Heart right ventricle (tissue), 16 donors: ENCODE measurements at regions of chr19 and their contacts with region 1.

Region 1: DNA sequence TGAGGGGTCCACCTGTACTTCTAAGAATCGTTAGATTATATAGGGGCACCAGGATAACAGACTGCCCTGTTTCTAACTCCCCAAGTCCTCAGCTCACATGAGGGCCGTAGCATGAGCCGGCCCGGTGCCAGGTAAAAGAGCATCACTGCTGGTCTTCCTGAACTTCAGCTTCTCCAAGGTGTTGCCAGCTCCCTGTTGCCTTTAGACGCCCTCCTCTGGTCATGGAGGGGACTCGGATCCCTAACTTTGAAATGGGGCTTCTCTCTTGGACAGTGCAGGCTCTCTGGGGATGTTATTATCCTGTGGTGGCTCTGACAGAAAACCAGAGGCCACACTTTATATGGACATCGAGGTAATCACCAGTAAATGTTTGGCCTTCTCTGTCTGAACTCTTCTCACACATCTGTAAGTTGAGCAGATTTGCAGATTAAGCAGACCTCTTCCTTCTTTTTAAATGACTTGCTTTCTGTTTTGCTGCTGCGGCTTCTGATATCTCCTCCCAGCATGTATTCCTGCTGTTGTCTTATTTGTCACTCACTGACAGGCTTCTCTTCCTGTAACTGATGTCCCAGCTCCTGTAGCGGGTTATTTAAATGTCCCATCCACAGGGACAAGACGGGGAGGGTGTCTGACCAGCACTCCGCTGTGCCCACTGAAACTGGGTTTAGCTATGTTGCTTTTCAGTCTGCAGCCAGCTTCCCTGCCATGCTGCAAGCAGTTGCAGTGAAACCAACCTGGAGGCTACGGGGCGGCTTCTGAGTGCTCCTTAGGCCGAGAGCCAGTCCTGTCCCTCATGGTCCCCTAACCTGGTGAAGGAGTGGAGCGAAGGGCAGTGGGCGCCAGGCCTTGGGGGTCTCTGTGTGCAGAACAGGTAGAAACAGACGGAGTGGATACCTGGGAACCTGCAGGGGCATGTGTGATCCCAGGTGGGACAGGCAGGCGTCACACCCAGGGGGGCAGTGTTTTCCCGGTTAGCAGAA is 39.2 kb downstream of the TSSK6 start:
- DNase-seq: no peak
- ATAC-seq: peak in 5 of 8 donors; percentile 30 to 53 (median 44)
- H3K4me3 ChIP-seq: no peak overlapping the region
- H3K27ac ChIP-seq: peak overlapping the region in 1 of 10 donors; percentile 38
- H3K4me1 ChIP-seq: peaks cover 0 to 44% (median 25%) of the 10 kb centered on the region in 9 donors
- H3K27me3 ChIP-seq: no peaks in the 10 kb centered on the region
- CTCF ChIP-seq: peak in 7 of 9 donors; percentile 20 to 54 (median 44)

Region 2: GRCh38 chr19:19410275-19411192 is 65.6 kb before region 1 on chr19:
- intact Hi-C with region 1: loop called in 2 of 10 experiments (anchors 10 kb)
- DNase-seq: no peak
- ATAC-seq: peak in 1 of 8 donors; percentile 24
- H3K4me3 ChIP-seq: no peak overlapping the region
- H3K27ac ChIP-seq: no peak overlapping the region
- H3K4me1 ChIP-seq: peaks cover 19 to 63% (median 54%) of the 10 kb centered on the region in 9 donors
- H3K27me3 ChIP-seq: no peaks in the 10 kb centered on the region
- CTCF ChIP-seq: no peak